WTC11 (cell line): ENCODE measurements at regions of chr18 and their contacts with region 1.

Region 1: DNA sequence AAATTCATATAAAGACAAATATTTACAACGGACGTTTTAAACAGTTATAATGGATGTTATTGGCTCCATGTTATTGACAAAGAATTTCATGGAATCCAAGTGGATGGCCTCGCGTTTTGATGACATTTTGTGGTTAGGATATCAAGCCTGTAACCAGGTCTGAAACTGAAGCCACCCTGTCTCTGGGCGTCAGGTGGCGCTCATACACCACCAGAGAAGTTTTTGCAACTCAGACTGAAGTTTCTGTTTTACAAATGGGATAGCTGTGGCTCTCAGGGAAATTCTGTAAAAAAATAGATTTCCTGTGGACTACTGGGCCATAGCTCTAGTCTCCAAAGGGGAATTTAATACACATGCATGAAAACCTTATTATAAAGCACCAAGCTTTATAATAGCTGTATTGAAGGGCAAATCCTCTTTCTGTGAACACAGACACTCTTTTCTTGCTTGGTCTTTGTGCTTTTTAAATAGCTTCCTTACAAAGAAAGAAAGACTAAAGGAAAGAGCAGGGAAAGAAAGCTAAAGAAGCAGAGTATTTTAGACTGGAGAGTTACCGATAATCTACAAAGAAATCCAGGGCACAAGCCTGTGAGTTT is 86.7 kb downstream of the C18orf54 start:
- DNase-seq: peak; percentile 80
- ATAC-seq: peak; percentile 95
- H3K4me3 Mint-ChIP-seq: no peak overlapping the region
- H3K27ac Mint-ChIP-seq: peak overlapping the region; percentile 74
- H3K4me1 Mint-ChIP-seq: peaks cover 11% of the 10 kb centered on the region
- H3K27me3 Mint-ChIP-seq: no peaks in the 10 kb centered on the region
- CTCF ChIP-seq: peak; percentile 71

Region 2: DNA sequence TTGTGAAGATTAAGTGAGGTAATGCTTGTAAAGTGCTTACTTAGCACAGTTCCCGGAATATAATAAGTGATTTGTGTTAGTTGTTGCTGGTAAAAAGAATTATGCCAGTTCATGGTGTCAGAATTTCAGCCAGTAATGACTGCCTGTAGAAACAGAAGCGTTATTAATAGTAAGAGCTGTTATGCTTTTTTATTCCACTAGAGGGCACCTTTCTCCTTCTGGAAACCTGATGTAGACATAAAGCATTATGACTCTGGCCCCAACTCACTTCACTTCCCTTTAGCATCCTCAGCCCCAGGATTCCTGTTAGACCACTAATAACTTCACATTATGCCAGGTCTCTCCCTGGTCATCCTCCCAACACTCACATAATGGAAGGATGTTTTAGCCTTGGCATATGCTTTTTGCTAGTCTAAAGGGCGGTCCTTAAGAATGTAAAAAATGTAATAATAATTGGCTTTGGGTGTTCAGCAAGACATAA is 51.8 kb before region 1 on chr18:
- CTCF ChIA-PET with region 1: interaction called, 14 read pairs
- POLR2A ChIA-PET with region 1: no interaction called
- DNase-seq: no peak
- ATAC-seq: peak; percentile 43
- H3K4me3 Mint-ChIP-seq: no peak overlapping the region
- H3K27ac Mint-ChIP-seq: no peak overlapping the region
- H3K4me1 Mint-ChIP-seq: peaks cover 37% of the 10 kb centered on the region
- H3K27me3 Mint-ChIP-seq: no peaks in the 10 kb centered on the region
- CTCF ChIP-seq: peak; percentile 73

Region 3: GRCh38 chr18:54405290-54405689 is 39.1 kb before region 1 on chr18:
- CTCF ChIA-PET with region 1: no interaction called
- POLR2A ChIA-PET with region 1: no interaction called
- DNase-seq: no peak
- ATAC-seq: no peak
- H3K4me3 Mint-ChIP-seq: no peak overlapping the region
- H3K27ac Mint-ChIP-seq: no peak overlapping the region
- H3K4me1 Mint-ChIP-seq: 0 out of 2 replicates have a peak, but pooled peaks cover 3% of the 10 kb centered on the region
- H3K27me3 Mint-ChIP-seq: no peaks in the 10 kb centered on the region
- CTCF ChIP-seq: no peak

Region 4: DNA sequence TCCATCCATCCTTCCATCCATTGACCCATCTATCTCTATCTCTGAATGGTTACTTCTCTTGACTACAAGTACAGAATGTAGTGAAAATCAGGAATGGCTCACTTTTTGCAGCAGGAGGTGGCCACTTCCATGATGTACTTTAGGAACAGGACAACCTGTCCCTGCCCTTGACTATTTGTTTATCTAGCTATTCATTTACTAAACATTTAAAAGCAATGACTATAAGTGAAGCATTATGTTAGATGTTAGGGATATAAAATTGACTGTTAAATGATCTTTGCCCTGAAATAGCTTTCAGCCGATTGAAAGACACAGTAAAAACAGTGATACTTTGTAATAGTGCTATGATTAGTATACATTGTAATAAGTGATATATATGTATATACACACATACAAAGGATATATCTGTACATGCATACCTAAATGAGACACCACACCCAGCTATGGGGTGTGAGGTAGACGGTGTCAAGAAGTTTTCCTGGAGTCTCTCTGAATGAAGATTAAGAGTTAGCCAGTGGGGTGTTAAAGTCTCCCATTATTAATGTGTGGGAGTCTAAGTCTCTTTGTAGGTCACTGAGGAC is 18.2 kb before region 1 on chr18:
- CTCF ChIA-PET with region 1: no interaction called
- POLR2A ChIA-PET with region 1: no interaction called
- DNase-seq: no peak
- ATAC-seq: no peak
- H3K4me3 Mint-ChIP-seq: no peak overlapping the region
- H3K27ac Mint-ChIP-seq: no peak overlapping the region
- H3K4me1 Mint-ChIP-seq: peaks cover 9% of the 10 kb centered on the region
- H3K27me3 Mint-ChIP-seq: no peaks in the 10 kb centered on the region
- CTCF ChIP-seq: no peak

Region 5: GRCh38 chr18:54529444-54529843 is 85.0 kb after region 1 on chr18:
- CTCF ChIA-PET with region 1: interaction called, 10 read pairs
- POLR2A ChIA-PET with region 1: no interaction called
- DNase-seq: no peak
- ATAC-seq: peak; percentile 78
- H3K4me3 Mint-ChIP-seq: peak overlapping the region; percentile 52
- H3K27ac Mint-ChIP-seq: peak overlapping the region; percentile 98
- H3K4me1 Mint-ChIP-seq: peaks cover 67% of the 10 kb centered on the region
- H3K27me3 Mint-ChIP-seq: peaks cover 6% of the 10 kb centered on the region
- CTCF ChIP-seq: no peak

Region 6: DNA sequence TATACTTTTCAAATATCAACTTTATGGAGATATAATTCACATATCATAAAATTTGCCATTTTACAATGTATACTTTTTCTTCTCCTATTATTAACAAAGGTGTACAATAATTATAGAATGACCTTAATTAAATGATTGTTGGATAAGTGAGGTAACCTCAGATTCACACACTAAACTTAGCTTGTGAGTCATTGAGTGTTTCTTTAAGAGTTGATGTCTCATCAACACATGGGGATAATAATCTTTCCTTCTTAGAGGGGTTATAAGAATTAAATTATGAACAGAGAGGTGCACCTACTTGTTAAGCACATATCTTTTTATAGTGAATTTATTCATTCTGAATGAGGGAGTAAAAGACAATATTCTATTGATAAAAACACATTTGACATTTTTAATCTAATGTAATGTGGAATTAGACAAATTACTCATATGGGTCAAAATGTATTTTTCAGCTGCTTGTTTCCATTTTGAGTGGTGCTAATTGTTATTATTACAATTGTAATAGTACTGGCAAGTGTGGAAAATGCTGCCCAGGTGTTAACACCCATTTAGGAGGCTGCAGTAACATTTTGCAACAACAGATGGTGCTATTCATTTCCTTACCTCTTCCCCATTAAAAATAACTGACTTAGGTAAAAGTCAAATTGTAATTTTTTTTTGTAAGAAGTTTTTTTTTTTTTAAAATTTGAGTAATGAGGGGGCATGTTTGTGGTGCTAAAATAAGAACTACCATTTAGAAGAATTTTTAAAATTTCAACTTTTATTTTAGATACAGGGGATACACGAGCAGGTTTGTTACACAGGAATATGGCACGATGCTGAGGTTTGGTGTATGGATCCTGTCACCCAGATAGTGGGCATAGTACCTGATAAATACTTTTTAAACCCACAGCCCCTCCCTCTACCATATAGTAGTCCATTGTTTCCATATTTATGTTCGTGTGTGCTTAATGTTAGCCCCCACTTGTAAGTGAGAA is 114.5 kb after region 1 on chr18:
- CTCF ChIA-PET with region 1: interaction called, 31 read pairs
- POLR2A ChIA-PET with region 1: no interaction called
- DNase-seq: no peak
- ATAC-seq: peak; percentile 32; the same call in 1 of the 2 replicates
- H3K4me3 Mint-ChIP-seq: no peak overlapping the region
- H3K27ac Mint-ChIP-seq: no peak overlapping the region
- H3K4me1 Mint-ChIP-seq: peaks cover 19% of the 10 kb centered on the region
- H3K27me3 Mint-ChIP-seq: peaks cover 9% of the 10 kb centered on the region
- CTCF ChIP-seq: peak; percentile 50

Region 7: DNA sequence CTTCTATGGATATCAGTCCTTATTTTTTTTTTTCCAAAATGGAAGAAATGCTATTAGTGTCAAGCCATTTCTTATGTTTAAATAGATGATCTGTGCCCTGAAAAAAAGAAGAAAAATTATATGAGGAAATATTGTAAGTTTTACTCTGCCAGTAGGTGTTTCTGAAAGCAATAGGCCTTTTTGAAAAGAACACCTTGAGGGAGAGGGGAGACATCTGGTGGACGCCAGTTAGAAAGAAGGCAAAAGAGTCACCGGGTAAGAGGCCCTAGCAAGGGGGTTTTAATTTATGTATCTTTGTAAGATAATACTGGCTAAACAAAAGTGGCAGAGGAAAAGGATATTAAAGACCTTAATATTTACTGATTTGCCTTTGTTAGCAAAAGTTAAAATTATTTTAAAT is 202.8 kb after region 1 on chr18:
- CTCF ChIA-PET with region 1: interaction called, 18 read pairs
- POLR2A ChIA-PET with region 1: no interaction called
- DNase-seq: peak; percentile 24
- ATAC-seq: peak; percentile 77
- H3K4me3 Mint-ChIP-seq: no peak overlapping the region
- H3K27ac Mint-ChIP-seq: no peak overlapping the region
- H3K4me1 Mint-ChIP-seq: peaks cover 13% of the 10 kb centered on the region
- H3K27me3 Mint-ChIP-seq: no peaks in the 10 kb centered on the region
- CTCF ChIP-seq: no peak

Region 8: DNA sequence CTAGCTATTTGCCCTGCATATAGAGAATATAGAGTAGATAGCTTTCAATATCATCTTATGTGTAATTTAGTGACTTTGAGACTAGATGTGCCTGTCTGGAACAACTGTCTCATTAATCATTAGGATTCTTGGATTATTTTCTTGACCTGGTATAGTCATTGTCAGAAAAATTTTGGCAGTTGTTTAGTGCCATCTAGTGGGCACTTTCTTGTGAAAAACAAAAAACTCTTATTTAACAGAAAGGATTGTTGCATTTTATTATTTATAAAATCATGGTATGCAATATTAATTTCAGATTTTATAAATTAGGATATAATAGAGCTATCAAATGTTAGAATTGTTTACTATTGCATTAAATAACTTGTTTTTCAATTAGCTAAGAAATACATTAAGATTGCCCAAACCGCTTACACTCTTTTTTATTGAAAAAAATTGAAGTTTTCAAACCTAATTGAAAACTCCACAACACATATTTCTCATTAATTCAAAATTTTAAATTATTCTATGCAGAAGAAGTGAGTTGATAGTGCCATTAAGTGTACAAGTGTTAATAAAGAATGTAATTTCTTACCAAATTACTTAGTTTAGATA is 227.0 kb after region 1 on chr18:
- CTCF ChIA-PET with region 1: interaction called, 11 read pairs
- POLR2A ChIA-PET with region 1: no interaction called
- DNase-seq: no peak
- ATAC-seq: no peak
- H3K4me3 Mint-ChIP-seq: no peak overlapping the region
- H3K27ac Mint-ChIP-seq: no peak overlapping the region
- H3K4me1 Mint-ChIP-seq: no peaks in the 10 kb centered on the region
- H3K27me3 Mint-ChIP-seq: no peaks in the 10 kb centered on the region
- CTCF ChIP-seq: peak; percentile 57

Region 9: GRCh38 chr18:54679318-54680149 is 235.1 kb after region 1 on chr18:
- CTCF ChIA-PET with region 1: interaction called, 17 read pairs
- POLR2A ChIA-PET with region 1: no interaction called
- DNase-seq: no peak
- ATAC-seq: peak; percentile 69
- H3K4me3 Mint-ChIP-seq: no peak overlapping the region
- H3K27ac Mint-ChIP-seq: no peak overlapping the region
- H3K4me1 Mint-ChIP-seq: peaks cover 2% of the 10 kb centered on the region; the same call in 1 of the 2 replicates
- H3K27me3 Mint-ChIP-seq: no peaks in the 10 kb centered on the region
- CTCF ChIP-seq: no peak